ENCODE measurements at regions of chr12 and their contacts with region 1.

Region 1: DNA sequence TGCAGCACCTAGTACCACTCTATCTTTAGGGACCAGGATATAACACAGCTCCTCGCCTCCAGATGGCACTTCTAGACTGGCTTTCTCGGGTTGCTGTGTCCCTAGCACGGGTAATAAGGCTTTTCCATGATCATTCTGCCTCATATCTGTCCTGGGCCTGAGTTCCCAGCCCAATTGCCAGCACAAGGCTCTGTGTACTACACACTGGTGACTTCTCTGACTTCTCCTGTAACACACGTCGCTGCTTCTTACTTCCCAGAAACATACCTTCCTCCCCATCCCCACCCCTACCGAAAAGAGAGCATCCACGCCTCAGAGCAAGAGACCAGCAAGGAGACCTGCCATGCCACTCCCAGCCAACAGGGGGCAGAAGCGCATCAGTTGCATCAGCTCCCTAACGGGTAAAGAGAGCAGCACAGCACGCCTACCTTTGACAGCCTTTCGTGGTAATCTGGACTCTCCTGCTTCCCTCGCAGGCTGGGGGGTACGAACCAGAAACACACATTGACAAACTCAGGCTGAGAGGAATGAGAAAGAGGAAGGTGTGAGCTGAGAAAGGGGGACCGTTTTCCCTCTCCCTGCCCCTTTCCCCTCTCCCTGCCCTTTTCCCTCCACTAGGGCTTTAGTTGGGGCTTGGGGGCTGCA is 21.2 kb upstream of the ZNF740 start:
- DNase-seq: peak; percentile 88
- H3K4me3 ChIP-seq: peak overlapping the region in 1 of 2 experiments; percentile 4; a peak in 1 of 4 replicates
- H3K27ac ChIP-seq: no peak overlapping the region
- H3K4me1 ChIP-seq: peaks cover 0 to 2% of the 10 kb centered on the region in 2 experiments; a peak in 2 of 4 replicates
- H3K27me3 ChIP-seq: no peaks in the 10 kb centered on the region
- CTCF ChIP-seq: peak; percentile 96
- EP300 ChIP-seq: no peak
- RAD21 ChIP-seq: peak; percentile 86

Region 2: DNA sequence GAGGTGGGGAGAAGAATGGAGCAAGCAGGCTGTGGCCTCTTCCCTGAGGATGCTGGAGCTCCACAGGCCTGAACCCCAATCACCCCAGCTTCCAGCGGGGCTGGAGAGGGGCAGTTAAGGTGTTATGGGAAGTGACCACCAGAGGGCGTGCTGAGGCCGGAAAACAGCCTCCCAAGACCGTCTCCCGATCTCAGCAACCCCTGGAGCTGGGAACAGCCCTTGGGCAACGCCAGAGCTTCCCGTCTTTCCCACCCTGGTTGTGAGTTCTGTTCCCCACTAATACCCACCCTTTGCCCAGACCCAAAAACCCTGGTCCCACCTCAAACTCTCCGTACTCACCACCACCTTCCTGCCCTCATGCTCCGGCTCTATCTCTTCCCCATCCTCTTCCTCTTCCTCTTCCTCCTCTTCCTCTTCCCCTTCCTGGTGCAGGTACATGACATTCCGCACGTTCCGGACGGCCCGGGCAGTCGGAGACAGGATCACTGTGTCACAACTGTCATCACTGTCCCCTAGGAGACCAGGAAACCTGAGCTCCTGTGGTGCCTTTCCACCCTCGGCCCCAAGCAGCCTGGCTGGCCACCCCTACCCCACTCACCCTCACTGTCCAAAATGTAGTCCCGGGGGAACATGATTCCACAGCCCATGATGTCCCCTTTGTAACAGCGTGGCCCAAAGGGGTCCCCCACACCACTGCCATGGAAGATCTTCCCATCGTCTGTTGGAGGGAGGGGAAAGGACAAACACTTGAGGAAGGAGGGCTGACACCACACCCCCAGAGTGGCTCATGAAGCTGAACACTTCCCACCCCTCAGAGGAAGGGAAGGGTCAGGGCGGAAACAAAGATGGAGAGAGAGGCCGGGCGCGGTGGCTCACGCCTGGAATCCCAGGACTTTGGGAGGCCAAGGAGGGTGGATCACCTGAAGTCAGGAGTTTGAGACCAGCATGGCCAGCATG is 93.1 kb before region 1 on chr12:
- CTCF ChIA-PET with region 1: interaction called, 43 read pairs
- POLR2A ChIA-PET with region 1: interaction called, 3 read pairs
- DNase-seq: peak; percentile 92
- H3K4me3 ChIP-seq: no peak overlapping the region; a peak in 1 of 4 replicates
- H3K27ac ChIP-seq: peak overlapping the region in 1 of 2 experiments; percentile 66; a peak in 2 of 4 replicates
- H3K4me1 ChIP-seq: peaks cover 20 to 22% of the 10 kb centered on the region in 2 experiments; a peak in 3 of 4 replicates
- H3K27me3 ChIP-seq: no peaks in the 10 kb centered on the region
- CTCF ChIP-seq: peak; percentile 84
- EP300 ChIP-seq: no peak
- RAD21 ChIP-seq: peak; percentile 94

Region 3: GRCh38 chr12:53131844-53132243 is 27.5 kb before region 1 on chr12:
- CTCF ChIA-PET with region 1: interaction called, 11 read pairs
- POLR2A ChIA-PET with region 1: no interaction called
- DNase-seq: no peak
- H3K4me3 ChIP-seq: no peak overlapping the region
- H3K27ac ChIP-seq: no peak overlapping the region
- H3K4me1 ChIP-seq: no peaks in the 10 kb centered on the region
- H3K27me3 ChIP-seq: no peaks in the 10 kb centered on the region
- CTCF ChIP-seq: no peak
- EP300 ChIP-seq: no peak
- RAD21 ChIP-seq: no peak

Region 4: DNA sequence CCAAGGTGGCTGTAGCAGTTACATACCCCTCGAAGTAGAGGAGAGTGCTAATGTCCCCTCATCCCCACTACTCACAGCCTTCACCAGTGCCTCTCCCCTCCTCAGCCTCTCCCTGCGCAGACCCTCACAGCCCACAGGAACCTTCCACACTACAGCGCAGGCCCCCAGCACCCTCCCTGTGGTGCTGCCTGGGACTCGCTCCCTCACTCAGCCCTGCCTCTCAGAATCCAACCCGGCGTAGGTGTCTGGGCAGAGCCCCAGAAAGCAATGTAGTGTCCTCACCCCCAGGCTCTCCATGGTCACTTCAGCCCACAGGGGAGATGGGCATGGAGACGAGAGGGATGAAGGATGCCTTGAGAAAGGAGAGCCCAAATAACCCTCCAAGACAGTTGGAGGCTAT is 10.3 kb after region 1 on chr12:
- CTCF ChIA-PET with region 1: interaction called, 272 read pairs
- POLR2A ChIA-PET with region 1: interaction called, 3 read pairs
- DNase-seq: no peak
- H3K4me3 ChIP-seq: no peak overlapping the region
- H3K27ac ChIP-seq: no peak overlapping the region
- H3K4me1 ChIP-seq: peaks cover 6 to 15% of the 10 kb centered on the region in 2 experiments; a peak in 2 of 4 replicates
- H3K27me3 ChIP-seq: no peaks in the 10 kb centered on the region
- CTCF ChIP-seq: no peak
- EP300 ChIP-seq: no peak
- RAD21 ChIP-seq: no peak

Region 5: GRCh38 chr12:53200458-53201176 is 41.3 kb after region 1 on chr12:
- CTCF ChIA-PET with region 1: interaction called, 181 read pairs
- POLR2A ChIA-PET with region 1: interaction called, 4 read pairs
- DNase-seq: no peak
- H3K4me3 ChIP-seq: no peak overlapping the region
- H3K27ac ChIP-seq: peak overlapping the region in 1 of 2 experiments; percentile 46; a peak in 1 of 4 replicates
- H3K4me1 ChIP-seq: no peaks in the 10 kb centered on the region
- H3K27me3 ChIP-seq: no peaks in the 10 kb centered on the region
- CTCF ChIP-seq: no peak
- EP300 ChIP-seq: no peak
- RAD21 ChIP-seq: no peak

Region 6: DNA sequence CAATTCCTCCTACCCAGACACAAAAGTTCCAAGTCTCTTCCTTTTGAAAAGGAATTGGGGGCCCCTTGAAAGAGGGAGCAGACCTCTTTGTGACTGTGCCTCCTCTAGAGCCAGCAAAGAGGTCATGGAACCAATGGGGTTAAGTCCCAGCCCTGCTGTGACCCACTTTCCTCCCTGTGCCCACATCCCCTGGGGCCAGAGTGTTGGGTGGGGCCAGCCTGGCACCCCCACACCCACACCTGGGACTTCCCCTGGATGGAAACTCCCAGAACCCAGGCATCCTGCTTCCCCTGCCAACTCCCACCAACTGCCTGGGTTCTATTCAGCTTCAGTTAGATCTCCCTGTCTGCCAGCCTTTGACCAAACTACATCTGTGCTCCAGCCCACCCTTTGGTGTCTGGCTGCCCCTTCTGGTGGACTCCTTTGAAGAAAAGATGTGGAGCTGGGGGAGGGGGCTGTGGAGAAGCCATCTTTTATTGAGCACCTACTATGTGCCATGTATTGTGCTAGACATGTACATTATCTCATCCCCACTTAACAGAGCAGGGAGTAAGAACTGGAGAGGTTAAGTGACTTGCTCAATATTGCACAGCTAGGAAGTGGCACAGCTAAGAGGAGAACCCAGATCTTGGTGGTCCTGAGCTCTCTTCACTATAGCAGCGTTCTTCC is 77.3 kb after region 1 on chr12:
- CTCF ChIA-PET with region 1: no interaction called
- POLR2A ChIA-PET with region 1: no interaction called
- DNase-seq: no peak
- H3K4me3 ChIP-seq: no peak overlapping the region
- H3K27ac ChIP-seq: no peak overlapping the region
- H3K4me1 ChIP-seq: peaks cover 27 to 35% of the 10 kb centered on the region in 2 experiments; a peak in 3 of 4 replicates
- H3K27me3 ChIP-seq: no peaks in the 10 kb centered on the region
- CTCF ChIP-seq: no peak
- EP300 ChIP-seq: no peak
- RAD21 ChIP-seq: no peak

Region 7: DNA sequence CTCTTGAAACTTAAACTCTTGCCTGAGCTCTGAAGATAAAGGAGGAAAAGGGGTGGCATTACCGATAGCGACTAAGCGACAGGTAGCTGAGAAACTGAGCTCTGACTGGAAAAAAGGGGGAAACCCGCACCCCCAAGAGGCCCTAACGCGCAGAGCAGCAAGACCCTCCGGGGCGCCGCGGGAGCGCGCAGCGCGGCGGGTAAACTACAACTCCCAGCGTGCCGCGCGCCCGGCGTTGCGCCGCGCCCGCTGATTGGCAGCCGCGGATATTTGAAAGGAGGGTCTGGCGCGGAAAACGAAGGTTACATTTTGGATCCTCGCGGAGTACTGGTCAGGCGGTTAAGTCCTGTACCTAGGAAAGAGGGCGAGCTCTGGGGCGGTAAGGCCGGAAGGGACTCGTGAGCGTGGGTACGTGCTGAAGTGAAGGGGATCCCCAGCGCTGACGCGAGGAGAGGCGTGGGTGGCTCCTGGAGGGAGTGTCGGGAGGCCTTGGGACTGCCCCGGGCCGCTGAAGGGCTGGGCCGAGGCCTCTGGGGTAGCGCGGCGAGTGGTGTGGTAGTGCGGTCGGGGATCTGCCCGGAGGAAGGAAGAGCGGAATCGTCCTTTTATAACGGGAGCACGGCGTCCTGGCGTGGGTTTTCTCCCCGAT is 108.8 kb after region 1 on chr12 and contains the start of gene ESPL1:
- CTCF ChIA-PET with region 1: interaction called, 20 read pairs
- POLR2A ChIA-PET with region 1: no interaction called
- DNase-seq: peak; percentile 95
- H3K4me3 ChIP-seq: peak within 1 kb of the TSS; percentile 76
- H3K27ac ChIP-seq: peak within 1 kb of the TSS; percentile 5 to 20; a peak in 1 of 4 replicates
- H3K4me1 ChIP-seq: peaks cover 5 to 21% of the 10 kb centered on the region in 2 experiments; a peak in 2 of 4 replicates
- H3K27me3 ChIP-seq: no peaks in the 10 kb centered on the region
- CTCF ChIP-seq: peak; percentile 53
- EP300 ChIP-seq: no peak; a peak in 1 of 4 replicates
- RAD21 ChIP-seq: peak; percentile 69
- polyA plus RNA-seq, gene ESPL1: 6.9 and 8.6 TPM in 2 replicates

Region 8: GRCh38 chr12:53295070-53295890 is 136.0 kb after region 1 on chr12 and contains the start of gene PFDN5:
- CTCF ChIA-PET with region 1: interaction called, 15 read pairs
- POLR2A ChIA-PET with region 1: no interaction called
- DNase-seq: peak; percentile 88
- H3K4me3 ChIP-seq: peak within 1 kb of the TSS; percentile 83 to 91
- H3K27ac ChIP-seq: peak within 1 kb of the TSS; percentile 88 to 96
- H3K4me1 ChIP-seq: peaks cover 11 to 17% of the 10 kb centered on the region in 2 experiments
- H3K27me3 ChIP-seq: no peaks in the 10 kb centered on the region
- CTCF ChIP-seq: no peak
- EP300 ChIP-seq: no peak; a peak in 1 of 4 replicates
- RAD21 ChIP-seq: 0 out of 2 replicates have a peak, but pooled peaks have one; percentile 1
- polyA plus RNA-seq, gene PFDN5: 1,198 and 1,880 TPM in 2 replicates

Region 9: GRCh38 chr12:53308276-53308675 is 149.0 kb after region 1 on chr12:
- CTCF ChIA-PET with region 1: no interaction called
- POLR2A ChIA-PET with region 1: no interaction called
- DNase-seq: no peak
- H3K4me3 ChIP-seq: no peak overlapping the region
- H3K27ac ChIP-seq: no peak overlapping the region
- H3K4me1 ChIP-seq: no peaks in the 10 kb centered on the region; a peak in 1 of 4 replicates
- H3K27me3 ChIP-seq: no peaks in the 10 kb centered on the region
- CTCF ChIP-seq: no peak
- EP300 ChIP-seq: no peak
- RAD21 ChIP-seq: no peak